ENCODE measurements at regions of chr5 and their contacts with region 1.

Region 1: GRCh38 chr5:141636413-141637122 is at the starts of genes HDAC3 and RELL2:
- DNase-seq: peak; percentile 70 to 95
- H3K4me3 ChIP-seq: peak within 1 kb of the TSS; percentile 81 to 82
- H3K27ac ChIP-seq: peak within 1 kb of the TSS; percentile 52 to 67
- H3K4me1 ChIP-seq: peaks cover 10 to 22% of the 10 kb centered on the region in 2 donors
- H3K27me3 ChIP-seq: no peaks in the 10 kb centered on the region
- CTCF ChIP-seq: no peak
- total RNA-seq, gene HDAC3: 43.4 TPM
- total RNA-seq, gene RELL2: 1.4 TPM

Region 2: DNA sequence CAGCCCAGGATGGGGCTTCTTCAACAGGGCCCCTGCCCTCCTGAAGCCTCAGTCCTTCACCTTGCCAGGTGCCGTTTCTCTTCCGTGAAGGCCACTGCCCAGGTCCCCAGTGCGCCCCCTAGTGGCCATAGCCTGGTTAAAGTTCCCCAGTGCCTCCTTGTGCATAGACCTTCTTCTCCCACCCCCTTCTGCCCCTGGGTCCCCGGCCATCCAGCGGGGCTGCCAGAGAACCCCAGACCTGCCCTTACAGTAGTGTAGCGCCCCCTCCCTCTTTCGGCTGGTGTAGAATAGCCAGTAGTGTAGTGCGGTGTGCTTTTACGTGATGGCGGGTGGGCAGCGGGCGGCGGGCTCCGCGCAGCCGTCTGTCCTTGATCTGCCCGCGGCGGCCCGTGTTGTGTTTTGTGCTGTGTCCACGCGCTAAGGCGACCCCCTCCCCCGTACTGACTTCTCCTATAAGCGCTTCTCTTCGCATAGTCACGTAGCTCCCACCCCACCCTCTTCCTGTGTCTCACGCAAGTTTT is 124.1 kb before region 1 on chr5:
- intact Hi-C with region 1: no loop called
- DNase-seq: peak in 1 of 2 donors; percentile 93
- H3K4me3 ChIP-seq: peak overlapping the region; percentile 52 to 78
- H3K27ac ChIP-seq: peak overlapping the region; percentile 98 to 99
- H3K4me1 ChIP-seq: peaks cover 36 to 51% of the 10 kb centered on the region in 2 donors
- H3K27me3 ChIP-seq: no peaks in the 10 kb centered on the region
- CTCF ChIP-seq: peak; percentile 83 to 87 (median 86)

Region 3: GRCh38 chr5:141590127-141590526 is 46.4 kb before region 1 on chr5:
- intact Hi-C with region 1: loop called (anchors 5 kb)
- DNase-seq: no peak
- H3K4me3 ChIP-seq: no peak overlapping the region
- H3K27ac ChIP-seq: no peak overlapping the region
- H3K4me1 ChIP-seq: peaks cover 0 to 5% of the 10 kb centered on the region in 2 donors
- H3K27me3 ChIP-seq: no peaks in the 10 kb centered on the region
- CTCF ChIP-seq: no peak

Region 4: DNA sequence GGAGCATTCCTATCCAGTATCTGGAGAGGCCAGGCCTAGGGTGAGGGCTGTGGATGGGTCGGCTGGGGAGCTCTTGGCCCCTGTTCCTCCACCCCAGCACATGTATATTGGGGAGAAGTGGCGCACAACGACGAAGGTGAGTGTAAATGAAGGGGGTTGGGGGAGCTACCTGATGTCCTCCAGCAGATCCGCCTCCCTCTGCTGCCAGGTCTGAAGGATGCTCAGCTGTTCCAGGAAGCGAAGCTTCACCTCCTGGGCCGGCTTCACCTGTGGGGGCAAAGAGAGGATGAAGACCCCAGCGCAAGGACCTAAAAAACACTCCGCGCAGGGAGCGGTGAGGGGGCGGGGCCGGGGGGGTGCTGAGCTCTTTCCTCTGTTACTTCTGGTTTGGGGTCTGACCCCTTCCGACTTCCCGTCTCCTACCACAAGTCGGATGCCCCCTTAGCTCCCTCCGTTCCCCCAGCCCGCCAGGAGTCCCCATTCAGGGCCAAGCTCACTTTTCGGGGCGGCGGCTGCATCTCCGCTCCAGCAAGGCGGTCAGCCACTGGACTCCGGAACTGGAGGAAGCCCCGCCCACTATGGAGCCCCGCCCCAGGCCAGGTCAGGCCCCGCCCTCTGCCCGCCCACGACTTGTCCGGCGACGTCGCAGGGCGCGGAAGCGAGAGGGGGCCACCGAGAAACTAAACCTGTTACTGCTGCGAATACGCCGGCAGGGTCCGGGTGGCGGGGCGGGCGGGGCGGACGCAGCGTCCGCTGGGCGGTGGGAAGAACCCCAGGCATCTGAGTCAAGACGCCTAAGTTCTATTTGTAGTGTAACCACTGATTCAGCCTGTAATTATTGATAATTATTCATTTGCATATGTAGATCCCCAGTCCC is 14.5 kb after region 1 on chr5 and contains the start of gene FCHSD1:
- intact Hi-C with region 1: loop called (anchors 2 kb)
- DNase-seq: peak; percentile 64 to 95
- H3K4me3 ChIP-seq: peak within 1 kb of the TSS; percentile 76 to 85
- H3K27ac ChIP-seq: peak within 1 kb of the TSS; percentile 12 to 65
- H3K4me1 ChIP-seq: peaks cover 0 to 12% of the 10 kb centered on the region in 2 donors
- H3K27me3 ChIP-seq: no peaks in the 10 kb centered on the region
- CTCF ChIP-seq: peak in 1 of 3 experiments; percentile 29
- total RNA-seq, gene FCHSD1: 127 TPM

Region 5: DNA sequence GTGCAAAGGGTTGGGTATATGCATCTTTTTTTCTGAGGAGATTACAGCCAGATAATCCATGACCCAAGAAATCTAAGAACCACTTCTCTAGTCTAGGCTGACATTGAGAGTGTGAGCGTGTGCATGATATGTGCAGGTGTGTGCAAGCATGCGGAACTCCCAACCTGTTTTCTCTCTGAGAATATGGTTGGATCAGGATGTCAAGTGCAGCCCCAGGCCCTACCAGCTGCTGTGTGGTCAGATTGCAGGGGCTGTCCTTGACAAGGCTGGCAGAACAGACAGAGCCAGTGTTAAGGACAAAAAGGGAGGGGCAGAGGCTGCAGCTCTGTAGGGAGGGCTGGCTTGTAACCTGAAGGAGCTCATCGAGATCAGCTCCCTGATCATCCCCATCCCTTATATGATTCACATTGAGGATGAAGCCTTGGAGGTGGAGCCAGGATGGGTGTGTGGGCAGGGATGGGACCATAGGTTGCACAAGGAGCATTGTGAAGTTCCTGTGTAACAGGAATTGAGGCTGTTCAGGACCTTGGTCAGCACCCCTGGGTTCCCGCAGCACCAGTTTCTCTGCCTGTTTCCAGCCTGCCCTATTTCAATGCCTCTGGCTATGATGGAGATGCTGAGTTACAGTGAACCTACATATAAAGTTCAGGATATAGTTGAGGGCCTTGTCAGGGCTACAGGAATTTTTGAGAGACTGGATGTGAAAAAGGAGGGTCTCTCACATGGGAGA is 98.1 kb after region 1 on chr5:
- intact Hi-C with region 1: no loop called
- DNase-seq: no peak
- H3K4me3 ChIP-seq: no peak overlapping the region
- H3K27ac ChIP-seq: no peak overlapping the region
- H3K4me1 ChIP-seq: no peaks in the 10 kb centered on the region
- H3K27me3 ChIP-seq: no peaks in the 10 kb centered on the region
- CTCF ChIP-seq: no peak